Activated B cell treated with CpG ODN at 0.5 μM for 24 hours (primary cell): ENCODE measurements at regions of chr9 and their contacts with region 1.

Region 1: DNA sequence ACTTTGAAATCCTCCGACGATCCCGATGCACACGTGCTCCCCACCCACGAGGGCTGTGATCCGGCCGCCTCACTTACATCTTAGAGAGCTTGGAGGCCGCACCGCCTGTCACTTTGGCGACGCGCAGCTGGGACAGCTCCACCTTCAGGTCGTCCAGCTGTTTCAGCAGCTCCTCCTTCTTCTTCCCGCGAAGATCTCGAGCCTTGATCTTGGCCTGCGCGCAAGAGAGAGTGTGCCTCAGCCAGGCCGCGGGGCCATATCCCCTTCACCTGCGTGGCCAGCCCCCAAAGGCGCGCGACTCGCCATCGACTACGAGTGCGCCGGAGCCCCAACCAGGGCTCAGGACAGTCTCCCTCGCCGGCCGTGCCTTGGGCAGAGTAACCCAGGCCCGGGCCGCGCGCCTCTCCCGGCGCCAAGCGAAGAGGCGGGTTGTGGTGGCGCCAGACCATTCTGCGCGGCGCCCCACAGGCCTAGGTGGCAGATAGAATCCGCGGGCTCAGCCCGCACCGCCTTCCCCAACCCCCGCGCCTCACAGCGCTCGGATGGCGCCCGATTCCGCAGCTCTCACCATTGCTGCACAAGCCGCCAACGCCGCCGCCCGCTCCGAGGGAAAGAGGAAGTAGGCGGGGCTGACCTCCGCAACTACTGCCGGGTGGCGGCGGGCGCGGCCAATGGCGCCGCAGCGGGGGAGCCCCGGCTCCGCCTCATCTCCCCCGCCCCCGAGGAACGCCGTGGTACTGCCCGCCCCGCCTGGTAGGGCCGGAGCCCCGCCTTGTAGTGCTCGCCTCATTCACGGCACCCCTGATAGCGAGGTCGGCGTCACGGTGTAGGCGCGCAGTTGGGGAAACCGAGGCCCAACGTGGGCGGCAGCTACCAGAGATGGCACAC is at the starts of genes ARPC5L and RPL35:
- DNase-seq: peak; percentile 92
- ATAC-seq: peak; percentile 95
- H3K4me3 Mint-ChIP-seq: peak within 1 kb of the TSS; percentile 95
- H3K27ac Mint-ChIP-seq: peak within 1 kb of the TSS; percentile 94
- H3K4me1 Mint-ChIP-seq: peaks cover 47% of the 10 kb centered on the region
- H3K27me3 Mint-ChIP-seq: no peaks in the 10 kb centered on the region
- CTCF ChIP-seq: no peak
- total RNA-seq, gene ARPC5L: 91.5 and 93.1 TPM in 2 replicates
- total RNA-seq, gene RPL35: 2,037 and 2,426 TPM in 2 replicates

Region 2: DNA sequence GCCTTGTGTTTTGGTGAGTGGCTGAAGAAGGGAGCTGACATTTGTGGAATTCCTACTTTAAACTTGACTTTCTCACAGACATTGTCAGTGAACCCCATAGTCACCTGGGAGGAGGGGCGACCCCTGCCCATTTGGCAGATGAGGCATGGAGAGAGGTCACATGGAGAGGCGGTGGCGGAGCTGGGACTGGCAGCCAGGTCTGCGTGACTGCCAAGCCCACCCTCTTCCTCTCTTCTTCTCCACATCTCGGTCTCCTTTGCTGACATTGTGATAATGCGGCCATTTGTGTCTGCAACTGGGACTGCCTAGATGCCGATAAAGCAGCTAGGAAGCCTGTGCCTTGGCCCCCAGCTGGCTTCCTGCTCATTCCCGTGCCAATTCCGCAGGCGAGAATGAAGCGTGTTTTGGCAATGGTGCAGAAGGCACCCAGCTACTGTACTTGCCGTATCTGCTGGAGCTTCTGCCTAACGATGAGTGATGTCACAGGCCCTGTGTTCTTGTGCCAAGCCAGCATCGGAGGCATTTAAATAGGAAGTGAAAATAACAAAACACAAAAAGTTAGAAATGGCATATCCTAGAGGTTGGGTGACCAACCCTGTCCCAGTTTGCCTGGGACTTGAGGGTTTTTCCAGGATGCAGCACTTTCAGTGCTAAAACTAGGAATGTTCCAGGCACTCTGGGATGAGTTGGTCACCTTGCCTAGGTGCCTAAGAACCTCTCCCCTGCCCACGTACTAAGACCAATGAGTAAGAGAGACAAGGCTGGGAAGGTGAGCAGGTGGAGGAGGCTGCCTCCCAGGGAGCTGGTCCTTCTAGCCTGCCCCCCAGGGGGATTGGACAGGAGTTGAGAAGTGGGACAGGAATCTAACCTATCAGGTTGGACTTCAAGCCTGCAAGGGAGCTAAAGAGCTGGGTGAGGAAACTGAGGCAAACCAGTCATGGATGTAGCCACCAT is 61.0 kb before region 1 on chr9:
- CTCF ChIA-PET with region 1: no interaction called
- POLR2A ChIA-PET with region 1: interaction called, 16 read pairs
- intact Hi-C with region 1: no loop called
- DNase-seq: peak; percentile 30
- ATAC-seq: peak; percentile 95
- H3K4me3 Mint-ChIP-seq: peak overlapping the region; percentile 64
- H3K27ac Mint-ChIP-seq: peak overlapping the region; percentile 94
- H3K4me1 Mint-ChIP-seq: peaks cover 40% of the 10 kb centered on the region
- H3K27me3 Mint-ChIP-seq: no peaks in the 10 kb centered on the region
- CTCF ChIP-seq: no peak

Region 3: DNA sequence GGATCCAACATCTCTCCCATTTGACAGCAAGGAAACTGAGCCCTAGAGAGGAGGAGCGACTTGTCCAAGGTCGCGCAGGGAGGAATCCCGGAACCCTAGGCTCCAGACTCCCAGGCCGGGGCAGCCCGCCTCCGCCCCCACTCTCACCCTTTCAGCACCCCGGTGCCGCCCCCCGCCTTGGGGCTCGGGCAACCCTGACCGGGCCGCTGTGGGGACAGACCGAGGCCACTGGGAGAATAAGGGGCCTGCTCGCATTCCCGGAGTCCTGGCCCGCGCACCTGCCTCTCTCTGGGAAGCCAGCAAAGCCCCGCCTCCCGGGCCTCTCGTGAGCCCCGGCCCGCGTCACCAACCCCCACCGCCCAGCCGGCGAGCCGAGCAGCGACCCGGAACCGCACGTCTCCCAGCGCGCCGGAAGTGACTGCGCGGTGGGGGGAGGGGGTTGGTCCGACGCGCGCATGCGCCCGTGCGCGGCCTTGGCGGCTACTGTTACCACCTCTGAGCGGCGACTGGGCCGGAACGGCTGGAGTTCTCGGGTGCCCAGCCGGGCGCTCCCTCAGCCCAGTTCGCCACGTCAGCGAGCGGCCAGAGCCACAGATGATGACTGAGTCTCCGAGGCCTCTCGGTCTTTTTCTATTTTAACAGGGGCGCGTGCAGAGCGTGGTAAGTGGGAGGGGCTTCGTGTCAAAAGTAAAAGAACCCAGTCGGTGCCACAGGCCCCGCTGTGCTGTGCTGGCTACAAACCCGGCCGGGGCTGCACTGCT is 79.3 kb after region 1 on chr9 and contains the start of gene GOLGA1:
- CTCF ChIA-PET with region 1: no interaction called
- POLR2A ChIA-PET with region 1: interaction called, 13 read pairs
- intact Hi-C with region 1: no loop called
- DNase-seq: peak; percentile 92
- ATAC-seq: peak; percentile 87
- H3K4me3 Mint-ChIP-seq: peak within 1 kb of the TSS; percentile 96
- H3K27ac Mint-ChIP-seq: peak within 1 kb of the TSS; percentile 98
- H3K4me1 Mint-ChIP-seq: peaks cover 23% of the 10 kb centered on the region
- H3K27me3 Mint-ChIP-seq: no peaks in the 10 kb centered on the region
- CTCF ChIP-seq: no peak
- total RNA-seq, gene GOLGA1: 11.8 and 14.0 TPM in 2 replicates

Region 4: GRCh38 chr9:125200210-125201047 is 338.8 kb after region 1 on chr9 and contains the start of gene RABEPK:
- CTCF ChIA-PET with region 1: no interaction called
- POLR2A ChIA-PET with region 1: interaction called, 4 read pairs
- intact Hi-C with region 1: loop called (anchors 2 kb)
- DNase-seq: peak; percentile 95
- ATAC-seq: peak; percentile 98
- H3K4me3 Mint-ChIP-seq: peak within 1 kb of the TSS; percentile 94
- H3K27ac Mint-ChIP-seq: peak within 1 kb of the TSS; percentile 92
- H3K4me1 Mint-ChIP-seq: peaks cover 13% of the 10 kb centered on the region
- H3K27me3 Mint-ChIP-seq: no peaks in the 10 kb centered on the region
- CTCF ChIP-seq: no peak
- total RNA-seq, gene RABEPK: 19.1 and 19.4 TPM in 2 replicates